ENCODE measurements at regions of chr9 and their contacts with region 1.

Region 1: GRCh38 chr9:110092792-110093191 is 115.2 kb downstream of the C9orf152 start:
- DNase-seq: no peak
- H3K4me3 ChIP-seq: no peak overlapping the region
- H3K27ac ChIP-seq: no peak overlapping the region
- H3K4me1 ChIP-seq: peaks cover 0 to 12% (median 2%) of the 10 kb centered on the region in 4 experiments; a peak in 4 of 7 replicates
- H3K27me3 ChIP-seq: no peaks in the 10 kb centered on the region
- CTCF ChIP-seq: peak in 2 of 3 experiments; percentile 3 to 15; a peak in 1 of 4 replicates
- EP300 ChIP-seq: no peak
- POLR2A ChIP-seq: no peak
- RAD21 ChIP-seq: no peak; a peak in 1 of 4 replicates

Region 2: DNA sequence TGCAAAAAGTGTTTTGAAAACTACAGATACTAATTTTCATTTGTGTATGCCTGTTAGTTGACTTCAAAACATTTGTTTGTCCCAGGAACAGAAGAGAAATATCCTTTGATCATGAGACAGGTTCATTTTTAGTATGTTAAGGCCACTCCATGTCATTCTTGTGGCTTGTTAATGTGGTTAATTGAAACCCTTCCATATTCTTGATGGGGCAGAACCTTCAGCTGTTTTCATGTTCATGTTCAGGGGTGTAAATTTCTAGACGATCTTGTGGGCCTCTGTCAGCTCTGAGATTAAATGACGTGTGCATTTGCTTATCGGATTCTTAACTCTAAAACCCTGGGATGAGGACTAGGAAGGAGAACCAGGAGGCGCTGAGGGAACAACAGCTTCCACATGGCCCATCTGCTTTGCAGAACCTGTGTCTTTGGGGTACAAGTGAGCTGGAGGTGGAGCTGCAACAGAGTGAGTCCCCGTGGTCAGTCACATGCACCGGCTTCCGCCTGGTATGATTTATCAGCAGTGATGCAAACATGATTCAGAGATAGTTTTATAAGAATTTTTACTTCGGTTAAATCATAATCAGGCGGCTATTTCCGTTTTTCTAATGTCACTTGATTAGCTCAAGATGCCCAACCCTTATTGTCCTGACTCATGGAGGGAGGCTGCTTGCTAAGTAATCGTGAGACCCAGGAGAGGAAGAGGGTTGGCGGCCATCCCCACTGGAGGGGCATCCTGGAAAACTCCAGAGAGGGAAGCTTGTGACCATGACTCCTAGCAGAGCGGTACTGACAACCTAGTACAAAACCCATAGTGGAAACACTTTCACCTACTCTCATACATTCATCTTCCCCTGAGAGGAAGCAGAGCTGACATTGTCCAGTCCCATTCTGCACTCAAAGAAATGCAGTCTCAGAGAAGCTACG is 23.2 kb before region 1 on chr9:
- CTCF ChIA-PET with region 1: interaction called, 14 read pairs
- POLR2A ChIA-PET with region 1: no interaction called
- DNase-seq: no peak
- H3K4me3 ChIP-seq: no peak overlapping the region
- H3K27ac ChIP-seq: no peak overlapping the region
- H3K4me1 ChIP-seq: peaks cover 2 to 8% (median 5%) of the 10 kb centered on the region in 4 experiments; a peak in 5 of 7 replicates
- H3K27me3 ChIP-seq: no peaks in the 10 kb centered on the region
- CTCF ChIP-seq: no peak
- EP300 ChIP-seq: no peak
- POLR2A ChIP-seq: no peak
- RAD21 ChIP-seq: no peak

Measured in H1 (cell line).